ENCODE measurements at regions of chr3 and their contacts with region 1.

Region 1: GRCh38 chr3:141105828-141106628 is 54.9 kb downstream of the SPSB4 start:
- DNase-seq: peak; percentile 85
- H3K4me3 Mint-ChIP-seq: no peak overlapping the region
- H3K27ac Mint-ChIP-seq: no peak overlapping the region
- H3K4me1 Mint-ChIP-seq: no peaks in the 10 kb centered on the region
- H3K27me3 Mint-ChIP-seq: peaks cover 64% of the 10 kb centered on the region
- CTCF ChIP-seq: peak; percentile 67

Region 2: DNA sequence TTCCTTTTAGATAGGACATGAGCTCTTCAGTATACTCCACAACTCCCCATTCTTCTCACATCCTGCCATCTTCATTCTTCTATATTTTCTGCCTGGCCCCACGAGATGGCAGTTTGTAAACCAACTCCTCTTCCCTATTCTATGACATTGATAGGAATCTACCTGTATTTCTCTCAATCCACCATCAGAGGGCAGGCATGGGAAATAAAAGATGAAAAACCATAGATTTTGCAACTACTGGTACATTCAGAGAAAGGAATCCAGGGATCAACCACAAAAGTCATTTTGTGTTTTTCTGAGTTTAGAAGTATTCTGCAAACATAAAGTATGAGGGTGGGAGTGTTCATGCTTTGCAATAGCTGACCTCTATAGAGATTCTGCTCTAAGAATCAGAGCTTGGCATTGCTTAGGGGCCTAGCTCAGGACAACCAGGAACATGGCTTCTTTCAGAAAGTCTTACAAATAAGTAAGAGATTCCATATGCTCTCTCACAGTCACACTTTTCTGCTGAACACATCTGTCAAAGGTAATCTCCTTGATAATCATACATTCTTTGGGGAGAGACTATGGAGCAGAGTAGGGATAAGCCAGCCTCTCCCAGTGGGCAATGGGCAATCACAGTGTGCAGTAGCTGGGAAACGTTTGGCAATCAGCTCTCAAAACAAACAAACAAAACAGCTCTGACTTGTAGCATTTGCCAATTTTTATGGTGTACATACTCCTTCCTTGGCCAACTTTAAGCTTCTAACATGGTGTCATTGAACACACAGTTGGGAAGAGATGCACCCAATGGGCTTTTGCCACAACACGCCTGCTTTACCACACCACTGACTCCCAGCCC is 207.5 kb before region 1 on chr3:
- CTCF ChIA-PET with region 1: interaction called, 3 read pairs
- intact Hi-C with region 1: loop called (anchors 1 kb)
- DNase-seq: peak; percentile 70
- H3K4me3 Mint-ChIP-seq: no peak overlapping the region
- H3K27ac Mint-ChIP-seq: no peak overlapping the region
- H3K4me1 Mint-ChIP-seq: no peaks in the 10 kb centered on the region
- H3K27me3 Mint-ChIP-seq: peaks cover 30% of the 10 kb centered on the region
- CTCF ChIP-seq: no peak

Region 3: DNA sequence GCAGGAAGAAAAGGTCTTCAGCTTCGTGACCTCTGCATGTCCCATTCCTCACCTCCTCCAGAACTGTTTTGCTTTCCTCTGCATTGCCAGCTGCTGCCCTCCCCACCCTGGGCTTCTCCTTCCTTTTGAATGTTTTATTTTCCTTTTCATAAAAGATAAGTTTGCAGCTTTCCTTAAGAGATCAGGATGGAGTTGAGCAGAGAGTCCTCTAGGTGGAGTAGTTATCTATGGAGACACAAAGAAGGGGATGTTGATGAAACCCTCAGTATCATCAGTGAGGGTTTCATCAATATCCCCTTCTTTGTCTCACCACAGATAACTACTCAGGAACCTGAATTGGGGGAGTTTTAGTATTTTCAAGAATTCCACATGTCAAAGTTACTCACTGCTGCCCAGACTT is 183.4 kb before region 1 on chr3:
- CTCF ChIA-PET with region 1: interaction called, 6 read pairs
- intact Hi-C with region 1: loop called (anchors 1 kb)
- DNase-seq: no peak
- H3K4me3 Mint-ChIP-seq: no peak overlapping the region
- H3K27ac Mint-ChIP-seq: no peak overlapping the region
- H3K4me1 Mint-ChIP-seq: no peaks in the 10 kb centered on the region
- H3K27me3 Mint-ChIP-seq: peaks cover 44% of the 10 kb centered on the region
- CTCF ChIP-seq: peak; percentile 61

Region 4: GRCh38 chr3:141000027-141000663 is 105.9 kb before region 1 on chr3:
- CTCF ChIA-PET with region 1: interaction called, 15 read pairs
- intact Hi-C with region 1: loop called (anchors 1 kb)
- DNase-seq: peak; percentile 81
- H3K4me3 Mint-ChIP-seq: no peak overlapping the region
- H3K27ac Mint-ChIP-seq: no peak overlapping the region
- H3K4me1 Mint-ChIP-seq: peaks cover 8% of the 10 kb centered on the region
- H3K27me3 Mint-ChIP-seq: peaks cover 5% of the 10 kb centered on the region
- CTCF ChIP-seq: peak; percentile 67

Region 5: DNA sequence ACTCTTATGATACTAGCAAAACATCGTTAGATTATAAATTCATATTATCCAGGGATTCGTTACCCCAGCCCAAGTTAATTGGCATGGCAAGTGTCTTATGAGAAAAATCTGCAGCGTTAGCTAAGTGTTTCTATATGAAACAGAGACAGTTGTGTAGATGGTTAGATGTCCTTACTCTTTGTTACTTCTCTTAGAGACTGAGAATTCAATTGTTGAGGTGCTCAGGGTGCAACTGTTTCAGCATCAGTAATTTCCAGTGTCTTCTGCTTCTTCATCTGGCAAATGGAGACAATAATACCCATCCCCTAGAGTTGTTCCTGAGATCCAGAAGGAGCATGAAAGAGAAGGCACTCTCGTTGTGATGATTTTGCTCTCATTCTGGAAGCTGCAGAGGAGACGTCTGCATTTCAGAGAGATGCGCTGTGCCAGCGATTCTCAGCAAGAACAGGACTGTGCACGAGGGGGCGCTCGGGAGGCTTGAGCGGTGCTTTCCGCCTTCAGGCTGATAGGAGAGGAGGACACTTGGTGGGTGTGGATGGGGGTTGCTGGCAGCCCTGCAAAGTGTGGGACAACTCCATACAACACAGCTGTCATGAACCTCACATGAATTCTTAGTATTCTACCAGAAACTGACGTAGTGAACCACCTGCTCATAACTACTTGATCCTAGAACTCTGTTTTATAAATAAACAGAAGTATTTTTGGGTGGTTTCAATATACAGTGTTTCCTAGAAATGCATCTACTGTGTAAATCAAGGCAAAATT is 94.6 kb before region 1 on chr3:
- CTCF ChIA-PET with region 1: interaction called, 3 read pairs
- intact Hi-C with region 1: loop called (anchors 1 kb)
- DNase-seq: peak; percentile 94
- H3K4me3 Mint-ChIP-seq: no peak overlapping the region
- H3K27ac Mint-ChIP-seq: no peak overlapping the region
- H3K4me1 Mint-ChIP-seq: no peaks in the 10 kb centered on the region
- H3K27me3 Mint-ChIP-seq: peaks cover 84% of the 10 kb centered on the region
- CTCF ChIP-seq: peak; percentile 96

Region 6: GRCh38 chr3:141192345-141192744 is 86.3 kb after region 1 on chr3:
- CTCF ChIA-PET with region 1: interaction called, 5 read pairs
- intact Hi-C with region 1: loop called (anchors 2 kb)
- DNase-seq: peak; percentile 100
- H3K4me3 Mint-ChIP-seq: no peak overlapping the region
- H3K27ac Mint-ChIP-seq: no peak overlapping the region
- H3K4me1 Mint-ChIP-seq: peaks cover 7% of the 10 kb centered on the region
- H3K27me3 Mint-ChIP-seq: peaks cover 85% of the 10 kb centered on the region
- CTCF ChIP-seq: peak; percentile 99